Calu3 (cell line): ENCODE measurements at regions of chr12 and their contacts with region 1.

Region 1: DNA sequence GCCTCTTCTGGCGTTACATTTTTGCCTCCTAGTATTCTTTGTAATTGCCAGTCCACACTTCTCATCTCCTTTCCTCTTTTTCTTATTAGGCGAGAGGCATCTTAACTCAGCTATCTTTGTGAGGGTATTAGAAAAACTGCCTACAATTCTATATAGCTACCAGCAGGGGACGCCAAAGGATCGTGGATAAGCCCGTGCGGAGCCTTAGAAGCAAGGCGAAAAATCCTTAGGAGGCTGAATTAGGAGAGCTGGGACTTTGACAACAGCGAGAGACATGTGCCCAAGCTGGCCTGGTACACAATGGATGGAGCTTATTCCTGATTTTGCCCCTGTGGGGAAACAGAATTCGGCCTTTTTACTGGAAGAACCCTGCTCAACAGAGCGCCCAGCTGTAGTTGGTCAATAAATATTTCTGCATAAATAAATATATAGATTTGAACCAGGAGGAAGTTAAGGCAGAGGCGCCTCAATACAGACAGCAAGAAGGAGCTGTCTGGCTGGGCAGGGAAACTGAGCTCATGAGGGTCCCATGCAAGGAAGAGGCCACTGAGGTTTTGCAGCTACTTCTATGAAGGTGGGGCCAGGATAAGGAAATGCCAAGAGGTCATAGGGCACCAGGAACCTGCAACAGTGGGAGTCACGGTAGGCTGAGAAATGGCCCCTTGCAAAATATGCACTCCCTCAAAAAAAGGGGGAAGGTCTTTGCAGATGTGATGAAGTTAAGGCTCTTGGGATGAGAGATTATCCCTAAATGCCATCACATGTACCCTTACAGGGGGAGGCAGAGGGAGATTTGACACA is 14.6 kb upstream of the RBM19 start:
- DNase-seq: peak; percentile 58
- H3K4me3 Mint-ChIP-seq: no peak overlapping the region
- H3K27ac Mint-ChIP-seq: no peak overlapping the region
- H3K4me1 Mint-ChIP-seq: no peaks in the 10 kb centered on the region
- H3K27me3 Mint-ChIP-seq: peaks cover 67% of the 10 kb centered on the region
- CTCF ChIP-seq: peak; percentile 86

Region 2: DNA sequence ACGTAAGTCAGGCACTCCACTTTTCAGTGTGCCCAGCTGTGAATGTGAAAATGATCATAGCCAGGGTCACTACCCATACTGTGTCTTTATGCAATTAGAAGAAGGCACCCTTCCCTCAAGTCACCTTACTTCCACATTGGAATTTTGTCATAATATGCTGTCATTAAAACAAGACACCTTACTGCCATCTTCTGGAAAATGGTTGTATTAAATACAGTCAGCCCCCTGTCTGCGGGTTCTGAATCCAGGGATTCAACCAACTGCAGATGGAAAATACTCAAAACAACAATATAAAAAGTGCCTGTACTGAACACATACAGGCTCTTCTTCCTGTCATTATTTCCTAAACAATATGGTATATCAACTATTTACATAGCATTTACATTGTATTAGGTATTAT is 495.4 kb after region 1 on chr12:
- CTCF ChIA-PET with region 1: interaction called, 9 read pairs
- intact Hi-C with region 1: loop called (anchors 1 kb)
- DNase-seq: no peak
- H3K4me3 Mint-ChIP-seq: no peak overlapping the region
- H3K27ac Mint-ChIP-seq: no peak overlapping the region
- H3K4me1 Mint-ChIP-seq: no peaks in the 10 kb centered on the region
- H3K27me3 Mint-ChIP-seq: peaks cover 20% of the 10 kb centered on the region
- CTCF ChIP-seq: no peak

Region 3: DNA sequence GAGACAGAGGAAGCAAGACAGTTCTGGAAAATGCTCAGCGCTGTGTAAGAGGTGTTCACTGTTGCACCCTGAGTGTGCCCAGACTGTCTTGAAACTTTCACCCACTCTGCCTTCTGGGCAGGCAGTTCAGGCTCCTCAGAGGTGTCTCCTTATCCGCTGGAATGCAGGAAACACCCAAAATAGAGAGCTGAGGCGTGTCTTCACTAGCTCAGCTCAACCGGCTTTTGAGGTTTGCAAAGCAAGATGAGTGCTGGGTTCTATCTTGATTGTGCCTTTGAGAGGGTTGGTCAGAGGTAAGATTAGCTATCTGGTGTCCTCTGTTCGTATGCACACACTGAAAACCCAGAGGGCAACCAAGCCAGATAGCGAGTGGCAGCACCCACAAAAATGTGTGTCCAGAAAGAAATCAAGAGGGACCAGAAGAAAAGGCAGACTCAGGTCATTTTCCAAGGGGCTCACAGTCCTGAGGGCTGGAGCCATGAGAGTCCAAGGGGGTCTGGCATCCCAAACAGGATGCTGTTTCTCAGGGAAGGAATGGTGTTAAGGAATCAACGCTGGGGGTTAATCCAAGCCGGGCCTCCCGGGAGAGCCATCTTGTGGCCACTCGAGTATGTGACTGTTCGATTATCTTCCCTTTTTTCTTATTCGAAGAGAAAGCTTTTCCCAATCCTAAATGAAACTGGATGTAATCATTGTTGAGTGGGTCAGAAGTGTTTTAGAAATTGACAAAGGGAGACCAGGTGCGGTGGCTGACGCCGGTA is 656.2 kb after region 1 on chr12:
- CTCF ChIA-PET with region 1: interaction called, 8 read pairs
- intact Hi-C with region 1: loop called (anchors 1 kb)
- DNase-seq: peak; percentile 18
- H3K4me3 Mint-ChIP-seq: no peak overlapping the region
- H3K27ac Mint-ChIP-seq: no peak overlapping the region
- H3K4me1 Mint-ChIP-seq: no peaks in the 10 kb centered on the region
- H3K27me3 Mint-ChIP-seq: no peaks in the 10 kb centered on the region
- CTCF ChIP-seq: peak; percentile 16

Region 4: DNA sequence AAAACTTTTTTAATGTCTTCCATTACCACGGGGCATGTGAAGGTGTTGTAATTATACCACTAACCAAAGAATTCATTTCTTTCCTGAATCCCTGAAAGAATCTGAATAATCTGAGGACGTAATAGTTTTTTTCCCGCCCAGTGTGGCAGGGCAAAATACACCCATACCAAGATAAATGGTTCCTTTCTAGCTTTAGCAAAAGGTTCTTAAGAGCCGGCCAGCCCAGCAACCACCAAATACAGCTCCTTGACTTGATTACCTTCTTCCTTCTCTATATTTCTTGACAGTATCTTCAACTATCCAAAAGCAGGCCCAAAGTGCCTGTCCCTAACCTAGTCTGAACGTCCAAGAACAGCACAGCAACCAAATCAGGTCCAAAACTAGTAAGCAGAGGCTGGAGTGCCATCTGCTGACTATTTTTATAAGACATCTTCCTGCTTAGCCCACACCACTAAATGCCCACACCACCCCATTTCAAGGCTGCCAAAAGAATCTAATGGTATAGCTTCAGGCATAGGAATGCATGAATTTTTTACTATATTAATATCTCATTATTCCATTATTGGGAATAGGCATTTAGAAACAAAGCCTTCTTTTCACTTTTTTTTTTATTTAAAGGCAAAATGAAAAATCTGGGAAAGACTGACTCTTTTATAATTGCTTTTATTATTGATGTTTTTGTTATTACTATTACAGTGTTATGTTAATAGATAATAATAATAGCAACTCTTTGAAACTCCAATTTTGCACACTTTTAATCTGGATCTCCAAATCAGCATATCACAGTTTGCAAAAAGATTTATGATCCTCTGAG is 1772.4 kb after region 1 on chr12:
- CTCF ChIA-PET with region 1: no interaction called
- intact Hi-C with region 1: loop called (anchors 5 kb)
- DNase-seq: peak; percentile 30
- H3K4me3 Mint-ChIP-seq: no peak overlapping the region
- H3K27ac Mint-ChIP-seq: no peak overlapping the region
- H3K4me1 Mint-ChIP-seq: no peaks in the 10 kb centered on the region
- H3K27me3 Mint-ChIP-seq: peaks cover 14% of the 10 kb centered on the region
- CTCF ChIP-seq: no peak